ENCODE measurements at regions of chr2 and their contacts with region 1.

Region 1: DNA sequence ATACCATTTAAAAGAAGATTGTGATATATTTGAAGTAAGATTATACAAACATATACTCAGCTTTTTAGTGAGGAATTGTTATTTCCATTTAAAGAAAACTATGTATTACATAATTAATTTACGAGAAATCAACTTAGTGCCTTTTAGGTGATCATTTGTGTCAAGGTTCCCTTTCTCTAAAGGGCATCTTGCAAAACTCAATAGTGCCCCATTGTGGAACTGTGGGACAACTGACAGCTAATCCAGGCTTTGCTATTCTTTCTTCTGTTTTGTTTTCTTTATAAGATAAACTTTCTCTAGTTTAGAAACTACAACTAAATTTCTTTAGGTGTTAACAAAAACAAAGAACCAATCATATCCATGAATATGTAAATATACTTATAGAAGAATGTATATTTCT is 24.3 kb upstream of the VIT start:
- DNase-seq: peak; percentile 69
- ATAC-seq: peak; percentile 69
- H3K4me3 ChIP-seq: no peak overlapping the region
- H3K27ac ChIP-seq: no peak overlapping the region
- H3K4me1 ChIP-seq: peaks cover 7% of the 10 kb centered on the region; the same call in 1 of the 2 replicates
- H3K27me3 ChIP-seq: no peaks in the 10 kb centered on the region
- CTCF ChIP-seq: peak; percentile 73
- POLR2A ChIP-seq: no peak; the same call in 1 of the 2 replicates
- RAD21 ChIP-seq: peak; percentile 84

Region 2: DNA sequence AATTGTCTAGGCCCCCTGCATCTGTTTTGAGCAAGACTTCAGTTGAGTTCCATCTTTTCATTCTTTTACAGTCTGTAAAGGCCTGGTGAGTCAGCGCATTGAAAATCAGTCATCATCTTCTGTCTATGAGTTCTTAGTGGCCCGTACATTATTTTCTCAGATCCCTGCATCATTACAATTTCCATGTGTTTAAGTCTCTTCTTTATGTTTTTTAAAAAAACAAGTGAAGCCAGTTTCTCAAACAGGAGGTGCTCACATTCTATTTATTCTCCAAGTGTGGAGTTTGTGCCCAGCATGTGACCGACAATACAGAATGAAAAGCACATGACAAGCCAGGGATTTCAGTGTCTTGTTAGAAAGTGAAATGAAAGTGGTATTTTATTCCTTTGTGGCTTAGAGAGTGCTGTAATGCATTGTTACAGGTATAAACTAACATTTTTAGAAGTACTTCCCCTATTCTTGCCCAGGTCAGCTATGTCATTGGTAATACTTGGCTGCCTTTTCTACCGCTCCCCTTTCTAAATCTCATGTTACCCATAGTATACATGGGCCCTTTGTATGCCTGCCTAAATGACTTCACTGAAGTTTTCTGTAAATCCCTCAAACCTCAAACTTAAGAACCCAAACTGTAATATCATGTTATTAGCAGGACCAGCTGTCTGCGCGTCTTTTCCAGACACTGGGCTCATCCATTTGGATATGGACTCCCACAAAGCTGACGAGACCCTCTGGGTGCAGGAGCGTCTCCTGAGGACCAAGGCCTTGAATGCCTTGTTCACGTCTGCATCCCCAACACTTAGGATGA is 141.8 kb before region 1 on chr2:
- CTCF ChIA-PET with region 1: no interaction called
- POLR2A ChIA-PET with region 1: no interaction called
- dilution Hi-C with region 1: no loop called
- in situ Hi-C with region 1: loop called (anchors 10 kb)
- intact Hi-C with region 1: no loop called
- DNase-seq: peak; percentile 88
- ATAC-seq: peak; percentile 63
- H3K4me3 ChIP-seq: no peak overlapping the region
- H3K27ac ChIP-seq: peak overlapping the region; percentile 50; the same call in 1 of the 2 replicates
- H3K4me1 ChIP-seq: peaks cover 17% of the 10 kb centered on the region
- H3K27me3 ChIP-seq: no peaks in the 10 kb centered on the region
- CTCF ChIP-seq: no peak
- POLR2A ChIP-seq: no peak
- RAD21 ChIP-seq: no peak

Region 3: DNA sequence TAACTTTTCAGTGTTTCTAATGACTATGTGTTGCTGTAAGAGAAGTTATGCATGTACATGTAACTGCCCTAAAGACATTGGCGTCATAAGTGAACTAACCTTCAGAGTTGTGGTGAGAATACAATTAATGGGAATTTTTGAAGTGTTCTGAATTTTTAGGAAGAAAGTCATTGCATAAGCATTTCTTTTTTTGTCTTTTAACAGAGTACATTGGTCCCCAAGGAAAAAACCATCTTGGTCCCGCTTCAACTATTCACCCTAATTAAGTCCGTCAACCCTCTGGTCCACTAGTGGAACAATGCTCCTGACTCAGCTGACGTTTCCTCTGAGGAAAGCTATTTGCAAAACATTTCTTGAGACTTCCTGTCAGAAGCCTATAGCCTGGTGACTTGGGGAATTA is 16.7 kb before region 1 on chr2:
- CTCF ChIA-PET with region 1: no interaction called
- POLR2A ChIA-PET with region 1: no interaction called
- dilution Hi-C with region 1: no loop called
- in situ Hi-C with region 1: no loop called
- intact Hi-C with region 1: no loop called
- DNase-seq: peak; percentile 48
- ATAC-seq: no peak
- H3K4me3 ChIP-seq: no peak overlapping the region
- H3K27ac ChIP-seq: no peak overlapping the region
- H3K4me1 ChIP-seq: peaks cover 2% of the 10 kb centered on the region; the same call in 1 of the 2 replicates
- H3K27me3 ChIP-seq: no peaks in the 10 kb centered on the region
- CTCF ChIP-seq: no peak
- POLR2A ChIP-seq: no peak
- RAD21 ChIP-seq: no peak

Measured in IMR-90 (cell line).